ENCODE measurements at regions of chr20 and their contacts with region 1.

Region 1: DNA sequence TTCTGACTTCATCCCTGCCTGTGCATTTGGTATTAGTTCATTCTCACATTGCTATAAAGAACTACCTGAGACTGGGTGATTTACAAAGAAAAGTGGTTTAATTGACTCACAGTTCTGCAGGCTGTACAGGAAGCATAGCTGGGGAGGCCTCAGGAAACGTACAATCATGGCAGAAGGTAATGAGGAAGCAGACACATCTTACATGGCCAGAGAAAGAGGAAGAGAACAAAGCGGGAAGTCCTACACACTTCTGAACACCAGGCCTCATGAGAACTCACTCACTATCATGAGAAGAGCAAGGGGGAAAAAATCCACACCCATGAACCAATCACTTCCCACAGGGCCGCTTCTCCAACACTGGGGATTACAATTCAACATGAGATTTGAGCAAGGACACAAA is 303.9 kb downstream of the CBLN4 start:
- DNase-seq: no peak
- H3K4me3 ChIP-seq: no peak overlapping the region
- CTCF ChIP-seq: no peak
- POLR2A ChIP-seq: no peak

Region 2: DNA sequence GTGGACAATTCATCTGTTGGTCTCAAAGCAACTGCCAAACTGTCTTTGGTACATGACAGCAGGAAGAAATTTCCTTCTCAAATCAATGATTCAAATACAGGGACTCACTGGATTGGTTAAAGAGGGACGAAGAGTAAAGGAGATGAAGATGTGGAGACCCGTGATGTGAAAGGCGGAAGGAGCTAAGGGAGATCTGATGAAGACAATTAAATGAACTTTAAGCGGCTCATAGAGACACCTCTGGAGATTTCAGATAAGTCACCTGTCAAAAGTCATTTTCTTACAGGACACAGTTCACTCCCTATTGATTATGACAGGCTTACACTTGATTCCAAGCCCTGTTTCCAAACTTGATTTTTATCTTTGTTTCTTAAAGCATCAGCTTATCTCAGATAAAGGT is 759.8 kb before region 1 on chr20:
- intact Hi-C with region 1: no loop called
- DNase-seq: no peak
- H3K4me3 ChIP-seq: no peak overlapping the region
- CTCF ChIP-seq: no peak
- POLR2A ChIP-seq: no peak

Region 3: GRCh38 chr20:55649254-55649653 is 52.2 kb before region 1 on chr20:
- intact Hi-C with region 1: loop called (anchors 10 kb)
- DNase-seq: no peak
- H3K4me3 ChIP-seq: no peak overlapping the region
- CTCF ChIP-seq: no peak
- POLR2A ChIP-seq: no peak

Region 4: DNA sequence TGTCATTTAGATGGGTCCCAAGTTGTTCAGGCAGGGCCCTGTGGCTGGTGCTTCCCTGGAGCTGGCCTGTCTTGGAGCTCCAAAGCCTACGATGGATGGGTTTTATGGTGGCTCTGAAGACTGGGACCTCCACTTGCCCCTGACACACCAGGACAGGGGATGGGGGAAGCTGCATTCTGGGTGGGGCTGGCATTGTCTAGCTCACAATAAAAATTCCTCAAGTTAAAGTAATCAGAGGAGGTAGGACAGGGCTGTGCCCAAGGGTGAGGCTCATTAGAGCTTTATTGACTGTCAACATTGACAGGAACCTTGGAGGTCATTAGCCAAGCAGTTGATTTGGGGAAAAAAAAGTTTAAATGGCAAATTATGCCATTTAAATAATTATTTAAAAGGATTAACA is 963.3 kb after region 1 on chr20:
- intact Hi-C with region 1: no loop called
- DNase-seq: no peak
- H3K4me3 ChIP-seq: no peak overlapping the region
- CTCF ChIP-seq: no peak
- POLR2A ChIP-seq: no peak